Activated T-helper 2 cell treated with anti-CD3 and anti-CD28 coated beads, Interferon-gamma antibody, Interleukin-2, Interleukin-4, amounts not matched to agents 10 μg/mL and 5 μg/mL and 100 μg/mL, durations not matched to agents 14 hours and 24 hours and 36 hours (primary cell): ENCODE measurements at regions of chr6 and their contacts with region 1.

Region 1: DNA sequence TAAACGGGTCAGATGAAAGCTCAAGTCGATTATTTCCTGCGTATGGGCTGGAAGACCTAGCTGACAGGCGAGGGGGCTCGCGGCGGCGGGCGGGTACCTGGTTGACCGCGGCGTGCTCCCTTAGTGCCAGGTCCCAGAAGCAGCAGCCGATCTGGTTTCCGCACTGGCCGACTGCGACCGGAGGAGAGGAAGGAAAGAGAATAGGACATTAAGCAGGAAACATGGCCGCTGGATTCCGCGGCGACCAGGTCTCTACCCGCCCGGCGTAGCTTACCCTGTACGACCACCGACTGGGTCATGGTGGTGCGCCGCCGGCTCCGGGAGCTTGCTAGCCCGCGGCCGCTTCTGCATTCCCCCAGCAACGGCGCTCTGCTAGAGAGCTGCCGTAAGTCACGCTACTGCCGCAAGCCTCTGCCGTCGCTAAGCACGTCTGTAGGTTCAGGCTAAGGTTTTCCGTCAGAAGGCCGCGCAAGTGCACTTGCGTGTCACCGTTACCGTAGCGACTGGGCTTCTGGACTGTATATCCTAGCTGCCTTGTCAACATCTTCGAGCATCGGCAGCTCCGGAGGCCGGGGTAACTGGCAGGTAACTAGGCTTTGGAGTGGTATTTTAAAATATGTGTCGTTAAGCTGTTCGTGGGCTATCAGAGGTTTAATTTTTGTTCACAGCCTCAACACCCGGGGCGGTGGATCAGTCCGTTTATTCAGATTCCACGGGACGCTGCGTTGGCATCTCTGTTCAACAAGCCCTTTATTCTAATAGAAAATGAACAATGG is at the starts of genes FAM229B and TUBE1:
- DNase-seq: peak; percentile 87
- H3K4me3 Mint-ChIP-seq: no peak within 1 kb of the TSS
- H3K27ac Mint-ChIP-seq: no peak within 1 kb of the TSS
- H3K4me1 Mint-ChIP-seq: peaks cover 8% of the 10 kb centered on the region
- H3K27me3 Mint-ChIP-seq: peaks cover 24% of the 10 kb centered on the region
- total RNA-seq, gene FAM229B: 1.1 and 3.1 TPM in 2 replicates
- total RNA-seq, gene TUBE1: 21.0 and 24.3 TPM in 2 replicates

Region 2: GRCh38 chr6:111605100-111605751 is 482.1 kb before region 1 on chr6:
- intact Hi-C with region 1: loop called (anchors 1 kb)
- DNase-seq: peak; percentile 15
- H3K4me3 Mint-ChIP-seq: peak overlapping the region; percentile 90
- H3K27ac Mint-ChIP-seq: peak overlapping the region; percentile 98
- H3K4me1 Mint-ChIP-seq: peaks cover 49% of the 10 kb centered on the region
- H3K27me3 Mint-ChIP-seq: no peaks in the 10 kb centered on the region

Region 3: DNA sequence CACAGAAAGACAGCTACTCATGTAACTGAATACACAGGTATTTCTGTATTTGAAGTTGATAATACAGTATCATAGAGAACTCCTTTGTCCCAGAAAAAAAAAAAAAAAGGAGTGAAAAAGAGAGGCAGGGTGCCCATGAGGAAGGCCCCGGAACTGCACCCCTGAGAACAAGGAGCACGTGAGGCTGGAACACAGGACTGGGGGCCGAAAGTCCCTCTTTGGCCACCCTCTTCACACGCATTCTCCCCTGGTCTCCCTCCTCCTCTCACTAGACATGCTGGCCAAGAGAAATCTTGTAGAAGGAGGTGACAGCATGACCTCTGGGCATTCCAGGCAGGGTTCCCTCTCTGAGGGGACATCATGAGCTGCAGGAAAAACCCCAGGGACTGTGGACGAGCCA is 418.9 kb before region 1 on chr6:
- intact Hi-C with region 1: no loop called
- DNase-seq: no peak
- H3K4me3 Mint-ChIP-seq: no peak overlapping the region
- H3K27ac Mint-ChIP-seq: peak overlapping the region; percentile 42
- H3K4me1 Mint-ChIP-seq: peaks cover 7% of the 10 kb centered on the region
- H3K27me3 Mint-ChIP-seq: no peaks in the 10 kb centered on the region

Region 4: DNA sequence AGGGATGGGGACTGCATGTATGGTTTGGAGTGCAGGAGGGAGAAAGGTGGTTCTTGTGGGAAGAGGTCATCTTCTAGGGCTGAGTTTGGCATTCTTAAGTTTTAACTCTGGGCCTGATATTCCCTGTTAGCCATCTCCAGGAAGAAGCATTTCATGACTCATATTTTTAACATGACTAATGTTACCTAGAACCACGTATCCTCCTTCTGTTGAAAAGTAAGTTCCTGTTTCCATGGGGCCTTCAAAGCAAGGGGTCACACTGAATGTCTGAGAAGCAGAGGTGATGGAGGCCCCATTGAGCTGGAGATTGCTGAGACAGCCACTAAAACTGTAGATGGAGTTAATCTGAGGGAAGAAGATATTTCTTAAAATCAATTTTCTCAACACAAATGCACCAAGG is 30.2 kb after region 1 on chr6:
- intact Hi-C with region 1: loop called (anchors 2 kb)
- DNase-seq: no peak
- H3K4me3 Mint-ChIP-seq: peak overlapping the region; percentile 41
- H3K27ac Mint-ChIP-seq: peak overlapping the region; percentile 82
- H3K4me1 Mint-ChIP-seq: peaks cover 20% of the 10 kb centered on the region
- H3K27me3 Mint-ChIP-seq: peaks cover 12% of the 10 kb centered on the region

Region 5: GRCh38 chr6:112163295-112164257 is 76.3 kb after region 1 on chr6:
- intact Hi-C with region 1: loop called (anchors 1 kb)
- DNase-seq: peak; percentile 61
- H3K4me3 Mint-ChIP-seq: peak overlapping the region; percentile 45
- H3K27ac Mint-ChIP-seq: no peak overlapping the region
- H3K4me1 Mint-ChIP-seq: peaks cover 16% of the 10 kb centered on the region
- H3K27me3 Mint-ChIP-seq: peaks cover 55% of the 10 kb centered on the region